Activated T-helper 1 cell treated with anti-CD3 and anti-CD28 coated beads, Interleukin-12 subunit alpha, Interleukin-12 subunit beta, Interleukin-2, Interleukin-4 antibody, amounts not matched to agents 30 ng/mL and 10 ng/mL and 1 ng/mL, durations not matched to agents 14 hours and 24 hours and 36 hours (primary cell): ENCODE measurements at regions of chr12 and their contacts with region 1.

Region 1: GRCh38 chr12:55738123-55739024 is 4.5 kb upstream of the GDF11 start:
- DNase-seq: peak; percentile 73
- H3K4me3 Mint-ChIP-seq: peak overlapping the region; percentile 79
- H3K27ac Mint-ChIP-seq: peak overlapping the region; percentile 73
- H3K4me1 Mint-ChIP-seq: peaks cover 44% of the 10 kb centered on the region
- H3K27me3 Mint-ChIP-seq: peaks cover 3% of the 10 kb centered on the region

Region 2: DNA sequence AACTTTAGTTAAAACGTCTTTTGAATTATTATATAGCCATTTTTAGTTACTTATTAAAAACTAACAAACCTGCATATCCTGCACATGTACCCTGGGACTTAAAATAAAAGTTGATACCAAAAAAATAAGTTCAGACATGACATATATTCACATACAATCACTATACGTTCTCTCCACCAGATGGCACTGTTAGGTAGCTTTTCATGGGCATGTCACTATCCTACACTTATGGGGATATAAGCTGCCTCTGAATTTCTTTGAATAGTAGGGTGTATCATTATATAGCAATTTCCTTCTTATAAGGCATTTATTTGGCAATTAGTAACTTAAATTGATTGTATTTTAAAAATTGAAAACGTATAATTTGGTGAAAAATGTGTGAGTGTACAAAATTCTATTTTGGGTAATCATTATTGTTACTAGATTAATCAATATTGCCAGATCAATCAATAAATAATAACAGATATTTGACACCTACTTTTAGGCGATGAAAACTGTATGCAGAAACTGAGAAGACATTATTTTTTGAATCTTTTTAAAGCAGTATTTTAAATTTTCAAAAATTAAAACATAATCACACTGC is 549.3 kb before region 1 on chr12:
- intact Hi-C with region 1: loop called (anchors 1 kb)
- DNase-seq: peak; percentile 33
- H3K4me3 Mint-ChIP-seq: no peak overlapping the region
- H3K27ac Mint-ChIP-seq: no peak overlapping the region
- H3K4me1 Mint-ChIP-seq: no peaks in the 10 kb centered on the region
- H3K27me3 Mint-ChIP-seq: peaks cover 11% of the 10 kb centered on the region

Region 3: DNA sequence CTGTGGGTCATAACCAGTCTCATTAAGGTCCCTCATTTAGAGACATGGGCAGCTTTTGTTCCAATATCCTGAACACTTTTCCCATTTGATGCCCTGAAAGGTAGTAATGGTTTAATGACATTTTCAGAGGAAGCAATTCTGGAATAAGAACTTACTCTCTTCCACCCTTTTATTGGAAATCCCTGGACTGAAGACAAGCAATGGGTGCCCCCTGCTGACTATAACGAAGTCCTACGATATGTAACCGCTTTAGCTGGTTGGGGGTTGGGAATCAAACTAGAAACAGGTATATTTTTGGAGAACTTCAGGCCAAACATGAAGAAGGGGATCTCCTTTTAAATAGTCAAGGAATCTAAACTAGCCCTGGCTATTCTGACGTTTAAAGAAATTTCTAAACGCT is 58.7 kb after region 1 on chr12:
- intact Hi-C with region 1: loop called (anchors 1 kb)
- DNase-seq: no peak
- H3K4me3 Mint-ChIP-seq: no peak overlapping the region
- H3K27ac Mint-ChIP-seq: no peak overlapping the region
- H3K4me1 Mint-ChIP-seq: peaks cover 14% of the 10 kb centered on the region
- H3K27me3 Mint-ChIP-seq: no peaks in the 10 kb centered on the region

Region 4: GRCh38 chr12:55899082-55899481 is 160.7 kb after region 1 on chr12:
- intact Hi-C with region 1: loop called (anchors 1 kb)
- DNase-seq: no peak
- H3K4me3 Mint-ChIP-seq: no peak overlapping the region
- H3K27ac Mint-ChIP-seq: peak overlapping the region; percentile 65
- H3K4me1 Mint-ChIP-seq: peaks cover 8% of the 10 kb centered on the region
- H3K27me3 Mint-ChIP-seq: no peaks in the 10 kb centered on the region

Region 5: DNA sequence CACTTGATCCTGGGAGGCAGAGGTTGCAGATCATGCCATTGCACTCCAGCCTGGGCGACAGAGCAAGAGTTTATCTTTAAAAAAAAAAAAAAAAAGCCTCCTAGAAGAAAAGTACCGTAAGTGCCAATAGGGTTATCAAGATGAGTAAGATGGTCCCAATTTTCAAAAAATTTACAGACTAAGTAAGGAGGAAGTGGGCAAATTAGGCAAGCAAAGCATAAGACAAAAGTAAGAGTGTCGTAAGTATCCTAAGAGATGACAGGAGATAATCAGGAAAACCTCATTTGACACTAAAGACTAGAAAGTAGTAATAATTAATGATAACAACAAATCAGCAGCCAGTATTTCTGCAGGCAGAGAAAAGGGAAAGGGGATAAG is 177.1 kb after region 1 on chr12:
- intact Hi-C with region 1: no loop called
- DNase-seq: no peak
- H3K4me3 Mint-ChIP-seq: no peak overlapping the region
- H3K27ac Mint-ChIP-seq: no peak overlapping the region
- H3K4me1 Mint-ChIP-seq: peaks cover 30% of the 10 kb centered on the region
- H3K27me3 Mint-ChIP-seq: no peaks in the 10 kb centered on the region

Region 6: GRCh38 chr12:56029666-56030293 is 291.4 kb after region 1 on chr12:
- intact Hi-C with region 1: loop called (anchors 1 kb)
- DNase-seq: no peak
- H3K4me3 Mint-ChIP-seq: no peak overlapping the region
- H3K27ac Mint-ChIP-seq: peak overlapping the region; percentile 25
- H3K4me1 Mint-ChIP-seq: peaks cover 51% of the 10 kb centered on the region
- H3K27me3 Mint-ChIP-seq: no peaks in the 10 kb centered on the region

Region 7: DNA sequence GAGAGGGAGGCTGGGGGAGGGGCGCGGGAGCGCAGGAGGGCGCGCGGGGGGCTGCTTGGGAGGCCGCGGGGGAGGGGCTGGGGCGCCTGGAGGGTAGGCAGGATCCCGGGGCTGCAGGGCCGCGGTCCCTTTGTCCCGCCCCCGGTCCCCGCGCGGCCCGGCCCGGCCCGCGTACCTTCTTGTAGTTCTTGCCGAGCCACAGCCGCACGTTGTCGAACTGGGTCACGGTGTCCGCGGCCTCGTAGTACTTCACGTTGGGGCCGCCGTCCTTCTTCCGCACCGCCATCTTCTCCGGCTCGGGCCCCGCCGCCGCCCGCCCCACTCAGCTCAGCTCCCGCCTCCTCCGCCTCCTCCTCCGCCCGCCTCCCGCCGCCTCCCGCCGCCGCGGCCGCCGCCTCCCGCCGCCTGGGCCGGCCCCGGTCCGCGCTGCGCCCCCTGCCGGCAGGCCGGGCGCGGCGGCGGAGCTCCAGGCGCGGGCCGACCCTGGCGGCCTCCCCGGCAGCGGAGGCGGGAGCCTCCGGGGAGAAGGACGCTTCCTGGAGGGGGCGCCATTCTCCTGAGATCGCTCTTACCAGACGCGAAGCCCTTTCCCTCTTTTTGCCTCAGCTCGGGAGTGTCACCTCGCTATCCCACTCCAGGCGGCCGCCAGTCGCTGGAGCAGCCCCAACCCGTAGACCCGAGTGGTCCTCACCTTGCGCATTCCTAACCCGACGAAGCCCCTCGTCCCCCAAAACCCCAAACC is 451.0 kb after region 1 on chr12 and contains the start of gene SMARCC2:
- intact Hi-C with region 1: loop called (anchors 2 kb)
- DNase-seq: peak; percentile 85
- H3K4me3 Mint-ChIP-seq: peak within 1 kb of the TSS; percentile 95
- H3K27ac Mint-ChIP-seq: peak within 1 kb of the TSS; percentile 96
- H3K4me1 Mint-ChIP-seq: peaks cover 55% of the 10 kb centered on the region
- H3K27me3 Mint-ChIP-seq: peaks cover 2% of the 10 kb centered on the region
- total RNA-seq, gene SMARCC2: 124 and 132 TPM in 2 replicates